IMR-90 (cell line): ENCODE measurements at regions of chr7 and their contacts with region 1.

Region 1: DNA sequence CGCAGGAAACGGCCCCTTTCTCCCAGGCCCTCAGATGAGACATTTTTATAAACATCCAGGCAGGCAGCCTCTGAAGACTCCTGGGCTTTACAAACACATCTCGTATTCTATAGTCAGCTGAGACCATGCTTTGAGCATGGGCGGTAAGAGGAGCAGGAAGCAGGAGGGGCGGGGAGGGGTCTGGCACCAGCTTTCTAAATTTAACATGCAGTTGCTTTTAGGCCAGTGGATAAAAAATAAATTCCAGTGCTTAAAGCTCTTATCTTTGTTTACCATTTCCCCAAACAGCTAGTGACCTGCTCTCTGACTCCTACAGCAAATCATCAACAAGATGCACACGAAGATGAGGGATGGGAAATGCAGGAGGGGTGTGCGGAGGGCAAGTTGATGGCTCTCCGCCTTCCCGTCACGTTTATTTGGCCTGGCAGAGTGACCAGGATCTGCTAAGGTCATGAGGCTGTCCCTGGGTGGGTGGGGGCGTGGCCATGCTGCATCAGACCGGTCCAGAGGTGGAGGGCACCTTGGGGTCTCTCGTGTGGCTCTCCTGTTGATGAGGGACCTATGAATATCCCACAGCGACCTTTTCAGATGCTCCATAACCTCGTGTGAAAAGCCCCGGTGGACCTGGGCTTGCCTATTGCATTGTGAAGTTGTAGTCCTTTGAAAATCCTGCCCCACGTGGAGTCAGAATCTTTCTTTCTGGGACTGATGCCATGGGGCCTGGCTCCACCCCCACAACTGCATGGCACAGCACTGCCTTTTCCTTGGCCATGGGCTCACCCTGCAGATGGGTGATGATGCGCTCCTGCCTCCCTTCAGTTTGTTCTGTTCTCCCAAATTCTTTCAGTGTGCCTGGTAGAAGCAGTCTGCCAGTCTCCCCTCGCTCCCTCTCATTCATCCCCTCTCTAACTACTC is 67.5 kb downstream of the PARP12 start:
- DNase-seq: peak; percentile 87
- ATAC-seq: peak; percentile 89
- H3K4me3 ChIP-seq: no peak overlapping the region
- H3K27ac ChIP-seq: peak overlapping the region; percentile 82
- H3K4me1 ChIP-seq: peaks cover 20% of the 10 kb centered on the region
- H3K27me3 ChIP-seq: no peaks in the 10 kb centered on the region
- CTCF ChIP-seq: no peak
- POLR2A ChIP-seq: no peak
- RAD21 ChIP-seq: peak; percentile 27; the same call in 1 of the 2 replicates

Region 2: GRCh38 chr7:139829025-139829774 is 166.1 kb before region 1 on chr7 and contains the start of gene TBXAS1:
- CTCF ChIA-PET with region 1: no interaction called
- POLR2A ChIA-PET with region 1: no interaction called
- dilution Hi-C with region 1: no loop called
- in situ Hi-C with region 1: no loop called
- intact Hi-C with region 1: loop called (anchors 5 kb)
- DNase-seq: peak; percentile 47
- ATAC-seq: peak; percentile 33
- H3K4me3 ChIP-seq: peak within 1 kb of the TSS; percentile 4; the same call in 1 of the 2 replicates
- H3K27ac ChIP-seq: peak within 1 kb of the TSS; percentile 87
- H3K4me1 ChIP-seq: peaks cover 33% of the 10 kb centered on the region
- H3K27me3 ChIP-seq: no peaks in the 10 kb centered on the region
- CTCF ChIP-seq: no peak
- POLR2A ChIP-seq: no peak
- RAD21 ChIP-seq: no peak
- total RNA-seq, gene TBXAS1: 5.3 and 5.9 TPM in 2 replicates

Region 3: DNA sequence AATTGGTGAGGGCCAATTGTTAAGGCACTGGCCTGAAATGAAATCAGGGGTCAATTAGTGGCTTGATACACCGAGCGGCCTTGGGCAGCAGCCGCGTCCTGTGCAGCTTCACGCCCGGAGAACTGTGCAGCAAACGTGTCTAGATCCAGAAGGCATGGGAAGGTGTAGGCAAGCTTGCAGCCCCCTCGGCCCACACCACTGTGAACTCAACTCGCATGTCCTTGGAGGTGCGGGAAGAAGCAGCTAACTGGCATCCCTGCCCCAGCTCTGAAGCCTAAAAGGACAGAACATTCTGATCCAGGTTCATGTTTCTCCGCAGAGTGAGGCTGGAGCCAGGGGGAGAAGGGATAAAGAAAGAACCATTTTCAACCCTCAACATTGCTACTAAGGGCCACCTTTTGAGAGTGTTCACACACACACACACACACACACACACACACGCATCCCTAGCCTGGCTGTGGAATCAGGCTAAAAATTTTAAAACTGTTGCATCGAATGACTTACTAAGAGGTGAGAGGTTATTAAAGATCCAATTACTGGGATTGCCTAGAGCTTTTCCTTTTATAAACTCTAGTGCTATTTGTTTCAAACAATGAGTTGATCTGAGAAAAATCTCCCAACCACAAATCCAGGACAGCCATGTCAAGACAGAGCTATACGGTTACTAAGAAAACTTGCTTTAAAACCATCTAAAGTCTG is 36.5 kb before region 1 on chr7:
- CTCF ChIA-PET with region 1: no interaction called
- POLR2A ChIA-PET with region 1: interaction called, 5 read pairs
- dilution Hi-C with region 1: no loop called
- in situ Hi-C with region 1: no loop called
- intact Hi-C with region 1: loop called (anchors 1 kb)
- DNase-seq: peak; percentile 98
- ATAC-seq: peak; percentile 90
- H3K4me3 ChIP-seq: no peak overlapping the region
- H3K27ac ChIP-seq: peak overlapping the region; percentile 97
- H3K4me1 ChIP-seq: peaks cover 19% of the 10 kb centered on the region
- H3K27me3 ChIP-seq: no peaks in the 10 kb centered on the region; the same call in 1 of the 2 replicates
- CTCF ChIP-seq: no peak
- POLR2A ChIP-seq: no peak
- RAD21 ChIP-seq: no peak